ENCODE measurements at regions of chr6 and their contacts with region 1.

Region 1: GRCh38 chr6:8219352-8219943 is 117.1 kb upstream of the EEF1E1 start:
- DNase-seq: peak; percentile 27
- H3K4me3 ChIP-seq: no peak overlapping the region
- H3K27ac ChIP-seq: no peak overlapping the region
- H3K27me3 ChIP-seq: no peaks in the 10 kb centered on the region
- CTCF ChIP-seq: peak; percentile 84

Region 2: GRCh38 chr6:8114956-8115355 is 104.5 kb before region 1 on chr6:
- CTCF ChIA-PET with region 1: interaction called, 27 read pairs
- POLR2A ChIA-PET with region 1: no interaction called
- DNase-seq: no peak
- H3K4me3 ChIP-seq: no peak overlapping the region
- H3K27ac ChIP-seq: no peak overlapping the region
- H3K27me3 ChIP-seq: no peaks in the 10 kb centered on the region
- CTCF ChIP-seq: no peak

Region 3: DNA sequence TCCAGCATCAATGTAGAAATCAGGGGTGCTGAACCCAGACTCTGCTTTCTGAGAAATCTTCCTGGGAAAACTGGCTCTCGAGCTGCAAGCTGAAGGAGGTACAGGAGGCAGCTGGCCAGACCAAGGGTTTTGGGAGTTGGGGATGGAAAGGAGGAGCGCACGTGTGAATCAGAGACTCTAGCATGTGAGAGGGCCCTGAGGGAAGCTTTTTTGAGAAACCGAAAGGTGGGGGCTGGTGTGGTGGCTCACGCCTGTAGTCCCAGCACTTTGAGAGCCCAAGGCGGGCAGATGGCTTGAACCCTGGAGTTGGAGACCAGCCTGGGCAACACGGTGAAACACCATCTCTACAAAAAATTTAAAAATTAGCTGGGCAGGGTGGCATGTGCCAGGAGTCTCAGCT is 80.0 kb before region 1 on chr6:
- CTCF ChIA-PET with region 1: interaction called, 945 read pairs
- POLR2A ChIA-PET with region 1: no interaction called
- DNase-seq: no peak
- H3K4me3 ChIP-seq: no peak overlapping the region
- H3K27ac ChIP-seq: no peak overlapping the region
- H3K27me3 ChIP-seq: peaks cover 2% of the 10 kb centered on the region
- CTCF ChIP-seq: no peak

Region 4: GRCh38 chr6:8172530-8172929 is 46.9 kb before region 1 on chr6:
- CTCF ChIA-PET with region 1: interaction called, 15 read pairs
- POLR2A ChIA-PET with region 1: no interaction called
- DNase-seq: no peak
- H3K4me3 ChIP-seq: no peak overlapping the region
- H3K27ac ChIP-seq: no peak overlapping the region
- H3K27me3 ChIP-seq: no peaks in the 10 kb centered on the region
- CTCF ChIP-seq: no peak

Region 5: GRCh38 chr6:8200255-8200654 is 19.2 kb before region 1 on chr6:
- CTCF ChIA-PET with region 1: interaction called, 28 read pairs
- POLR2A ChIA-PET with region 1: no interaction called
- DNase-seq: no peak
- H3K4me3 ChIP-seq: no peak overlapping the region
- H3K27ac ChIP-seq: no peak overlapping the region
- H3K27me3 ChIP-seq: no peaks in the 10 kb centered on the region
- CTCF ChIP-seq: no peak

Region 6: DNA sequence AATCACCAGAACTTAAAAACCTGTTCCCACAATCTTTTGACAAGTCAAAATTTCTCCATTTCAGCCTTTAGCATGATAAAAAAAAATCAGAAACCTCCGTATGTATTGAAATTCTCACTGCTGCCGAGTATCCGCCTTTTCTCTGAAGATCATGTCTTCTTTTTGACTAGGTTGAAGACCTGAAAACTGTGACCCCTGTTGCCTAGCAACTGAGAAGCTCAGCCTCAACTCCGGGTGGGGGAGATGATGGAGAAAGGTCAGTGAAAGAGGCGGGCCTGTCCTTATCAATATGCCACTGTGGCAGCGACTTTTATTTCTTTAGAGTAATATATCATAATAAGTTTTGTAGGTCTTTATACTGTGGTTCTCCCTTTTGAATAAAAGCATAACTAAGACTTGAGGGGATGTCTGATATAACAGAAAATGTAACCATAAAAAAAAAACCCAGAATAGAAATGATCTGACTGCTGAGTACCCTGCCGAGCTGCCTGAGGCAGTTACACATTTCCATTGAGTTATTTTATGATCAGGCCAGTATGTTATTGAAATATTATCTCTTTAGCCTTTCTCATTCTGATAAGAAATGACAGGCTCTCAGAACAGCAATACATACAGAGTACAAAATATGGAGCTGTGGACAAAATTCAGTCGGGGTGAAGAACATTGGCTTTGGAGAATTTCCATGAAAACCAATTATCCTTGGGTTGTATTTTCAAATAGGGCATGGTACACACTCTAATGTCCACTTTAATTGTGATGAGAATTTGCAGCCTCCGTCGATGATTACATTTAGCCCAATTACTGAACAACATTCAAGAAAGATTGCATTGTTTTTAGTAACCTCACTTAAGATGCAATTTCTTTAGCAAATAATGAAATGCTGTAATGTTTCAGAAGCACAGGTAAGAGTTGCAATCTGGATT is 19.6 kb after region 1 on chr6:
- CTCF ChIA-PET with region 1: interaction called, 23 read pairs
- POLR2A ChIA-PET with region 1: no interaction called
- DNase-seq: no peak
- H3K4me3 ChIP-seq: no peak overlapping the region
- H3K27ac ChIP-seq: no peak overlapping the region
- H3K27me3 ChIP-seq: no peaks in the 10 kb centered on the region
- CTCF ChIP-seq: no peak

Region 7: DNA sequence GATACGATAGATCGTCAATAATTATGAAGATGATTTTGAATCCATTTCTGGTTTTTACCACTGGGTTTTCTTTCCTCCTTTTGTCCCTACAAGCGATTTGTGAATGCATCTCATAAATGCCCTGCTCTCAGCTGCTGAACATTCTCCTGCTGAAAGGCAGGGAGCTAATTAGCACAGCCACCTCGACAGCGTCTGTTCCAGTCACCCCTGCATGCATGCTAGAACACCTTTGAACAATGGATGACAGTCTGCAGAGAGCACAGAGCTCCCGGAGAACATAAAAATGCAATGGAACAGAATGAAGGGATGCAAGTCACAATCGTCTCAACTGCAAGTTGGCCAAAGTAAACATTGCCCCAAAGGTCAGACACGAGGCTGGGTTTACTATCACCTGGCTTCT is 110.1 kb after region 1 on chr6:
- CTCF ChIA-PET with region 1: no interaction called
- POLR2A ChIA-PET with region 1: no interaction called
- DNase-seq: no peak
- H3K4me3 ChIP-seq: no peak overlapping the region
- H3K27ac ChIP-seq: no peak overlapping the region
- H3K27me3 ChIP-seq: no peaks in the 10 kb centered on the region
- CTCF ChIP-seq: no peak

Measured in AG04450 (cell line).